Activated T-helper 2 cell treated with anti-CD3 and anti-CD28 coated beads, Interferon-gamma antibody, Interleukin-2, Interleukin-4, amounts not matched to agents 10 μg/mL and 5 μg/mL and 100 μg/mL, durations not matched to agents 14 hours and 24 hours and 36 hours (primary cell): ENCODE measurements at regions of chr11 and their contacts with region 1.

Region 1: GRCh38 chr11:73335204-73335923 is 27.3 kb downstream of the ARHGEF17 start:
- DNase-seq: peak; percentile 61
- H3K4me3 Mint-ChIP-seq: no peak overlapping the region
- H3K27ac Mint-ChIP-seq: no peak overlapping the region
- H3K4me1 Mint-ChIP-seq: peaks cover 4% of the 10 kb centered on the region
- H3K27me3 Mint-ChIP-seq: peaks cover 5% of the 10 kb centered on the region

Region 2: GRCh38 chr11:73295231-73295995 is 40.0 kb before region 1 on chr11:
- intact Hi-C with region 1: loop called (anchors 1 kb)
- DNase-seq: peak; percentile 69
- H3K4me3 Mint-ChIP-seq: no peak overlapping the region
- H3K27ac Mint-ChIP-seq: no peak overlapping the region
- H3K4me1 Mint-ChIP-seq: peaks cover 2% of the 10 kb centered on the region
- H3K27me3 Mint-ChIP-seq: peaks cover 15% of the 10 kb centered on the region

Region 3: DNA sequence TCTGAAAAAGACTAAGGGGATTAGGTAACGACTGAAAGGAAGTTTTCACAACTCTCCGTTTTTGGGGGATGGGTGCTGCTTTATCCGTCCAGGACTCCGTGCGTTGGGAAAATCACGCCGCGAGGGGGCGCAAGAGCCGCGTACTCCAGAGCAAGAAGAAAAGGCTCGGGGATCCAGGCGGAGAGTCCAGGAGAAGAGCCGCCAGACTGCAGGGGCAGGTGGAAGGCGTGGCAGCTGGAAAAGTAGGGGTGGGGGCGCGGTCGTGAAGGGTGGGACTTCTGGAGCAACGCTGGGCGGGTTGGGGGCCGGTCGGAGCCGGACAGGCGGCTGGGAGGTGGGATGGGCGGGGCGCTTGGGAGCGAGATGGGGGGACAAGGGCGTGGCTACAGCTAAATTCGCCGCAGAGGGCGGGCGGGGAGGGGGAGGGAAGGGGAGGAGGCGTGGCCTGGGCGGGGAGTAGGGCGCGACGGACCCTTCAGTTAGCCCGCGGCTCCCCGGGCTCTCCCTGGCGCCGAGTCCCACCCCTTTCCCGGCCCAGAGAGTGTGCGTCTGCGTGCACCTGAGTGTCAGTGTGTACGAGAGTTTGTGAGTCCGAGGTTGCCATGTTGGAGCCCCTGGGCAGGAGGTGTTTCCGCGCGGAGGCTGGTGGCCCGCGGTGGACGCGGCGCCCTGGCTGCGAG is 27.9 kb before region 1 on chr11:
- intact Hi-C with region 1: loop called (anchors 1 kb)
- DNase-seq: peak; percentile 80
- H3K4me3 Mint-ChIP-seq: peak overlapping the region; percentile 86
- H3K27ac Mint-ChIP-seq: no peak overlapping the region
- H3K4me1 Mint-ChIP-seq: peaks cover 6% of the 10 kb centered on the region
- H3K27me3 Mint-ChIP-seq: peaks cover 47% of the 10 kb centered on the region